ENCODE measurements at regions of chr15 and their contacts with region 1.

Region 1: DNA sequence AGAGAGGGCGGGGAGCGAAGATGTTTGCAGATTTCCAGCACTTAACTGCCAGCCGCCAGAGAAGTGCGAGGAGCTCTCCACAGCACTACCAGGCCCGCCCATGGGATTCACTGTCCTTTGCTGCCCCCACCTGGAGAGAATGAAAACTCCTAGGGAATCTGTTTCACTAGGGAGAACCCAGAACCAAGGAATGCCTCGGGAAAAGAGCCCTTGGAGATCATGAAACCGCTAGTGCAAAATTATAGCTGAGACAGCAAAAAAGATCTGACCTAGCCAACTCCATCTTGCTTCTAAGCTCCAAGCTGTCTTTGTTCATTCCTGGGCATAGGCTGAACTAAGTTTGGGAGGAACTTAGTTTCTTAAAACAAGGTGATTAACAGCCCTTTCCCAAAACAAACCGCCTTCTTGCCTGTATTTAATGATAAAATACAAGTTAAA is 82.6 kb upstream of the GCNT3 start:
- DNase-seq: peak; percentile 44 to 74 (median 65)
- ATAC-seq: peak; percentile 89
- H3K4me3 ChIP-seq: no peak overlapping the region
- H3K4me3 Mint-ChIP-seq: no peak overlapping the region
- H3K27ac ChIP-seq: no peak overlapping the region
- H3K27ac Mint-ChIP-seq: peak overlapping the region in 5 of 9 donors; percentile 2 to 48 (median 22)
- H3K4me1 ChIP-seq: peaks cover 0 to 8% of the 10 kb centered on the region in 2 donors
- H3K4me1 Mint-ChIP-seq: peaks cover 14 to 28% (median 20%) of the 10 kb centered on the region in 7 donors
- H3K27me3 ChIP-seq: no peaks in the 10 kb centered on the region
- H3K27me3 Mint-ChIP-seq: peaks cover 0 to 15% (median 0%) of the 10 kb centered on the region in 5 donors

Region 2: GRCh38 chr15:58770857-58771620 is 757.9 kb before region 1 on chr15 and contains the start of gene MINDY2:
- CTCF ChIA-PET with region 1: no interaction called
- POLR2A ChIA-PET with region 1: no interaction called
- intact Hi-C with region 1: loop called in 1 of 2 experiments (anchors 10 kb)
- DNase-seq: peak; percentile 85 to 92 (median 90)
- ATAC-seq: peak; percentile 98
- H3K4me3 ChIP-seq: peak within 1 kb of the TSS; percentile 83
- H3K4me3 Mint-ChIP-seq: peak within 1 kb of the TSS in 2 of 10 donors; percentile 2 to 20
- H3K27ac ChIP-seq: peak within 1 kb of the TSS; percentile 90
- H3K27ac Mint-ChIP-seq: peak within 1 kb of the TSS in 7 of 9 donors; percentile 86 to 96 (median 93)
- H3K4me1 ChIP-seq: peaks cover 24 to 32% of the 10 kb centered on the region in 2 donors
- H3K4me1 Mint-ChIP-seq: peaks cover 0 to 21% (median 9%) of the 10 kb centered on the region in 7 donors
- H3K27me3 ChIP-seq: no peaks in the 10 kb centered on the region
- H3K27me3 Mint-ChIP-seq: no peaks in the 10 kb centered on the region
- total RNA-seq, gene MINDY2: 10.4 to 16.6 (median 11.5) TPM

Region 3: DNA sequence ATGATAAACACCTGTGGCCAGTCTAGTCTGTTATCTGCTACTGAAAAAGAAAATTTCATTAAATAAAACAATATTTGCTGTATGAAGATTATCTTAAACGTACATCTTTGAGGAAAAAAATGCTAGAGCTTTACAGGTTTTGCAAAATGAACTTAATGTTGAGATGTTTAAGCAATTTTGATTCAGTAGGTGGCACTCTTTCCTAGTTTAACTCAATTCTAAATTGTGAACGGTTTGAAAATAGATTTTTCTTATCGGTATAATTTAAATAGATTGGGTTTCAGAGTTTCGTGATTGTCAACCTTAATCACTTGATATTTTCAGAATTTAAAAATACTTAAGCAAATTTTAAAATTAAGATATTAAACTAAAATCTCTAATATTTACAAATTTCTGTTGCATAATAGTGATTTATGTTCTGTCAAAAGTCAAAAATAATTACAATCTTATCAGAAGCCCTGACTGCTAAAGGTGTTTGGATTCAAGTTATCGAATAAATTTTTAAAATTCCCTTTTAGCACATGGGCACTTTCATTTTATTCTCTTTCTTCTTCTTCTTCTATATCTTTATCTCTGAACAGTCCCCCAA is 548.5 kb before region 1 on chr15:
- CTCF ChIA-PET with region 1: interaction called, 9 read pairs
- POLR2A ChIA-PET with region 1: interaction called, 4 read pairs
- intact Hi-C with region 1: loop called (anchors 1 to 2 kb)
- DNase-seq: peak in 6 of 9 donors; percentile 30 to 57 (median 48)
- ATAC-seq: peak; percentile 62
- H3K4me3 ChIP-seq: no peak overlapping the region
- H3K4me3 Mint-ChIP-seq: peak overlapping the region in 3 of 10 donors; percentile 55 to 74 (median 60)
- H3K27ac ChIP-seq: no peak overlapping the region
- H3K27ac Mint-ChIP-seq: peak overlapping the region in 1 of 9 donors; percentile 85
- H3K4me1 ChIP-seq: peaks cover 19 to 20% of the 10 kb centered on the region in 2 donors
- H3K4me1 Mint-ChIP-seq: peaks cover 21 to 37% (median 27%) of the 10 kb centered on the region in 7 donors
- H3K27me3 ChIP-seq: no peaks in the 10 kb centered on the region
- H3K27me3 Mint-ChIP-seq: peaks cover 0 to 18% (median 0%) of the 10 kb centered on the region in 5 donors

Region 4: GRCh38 chr15:59174835-59175831 is 353.9 kb before region 1 on chr15:
- CTCF ChIA-PET with region 1: interaction called, 9 read pairs
- POLR2A ChIA-PET with region 1: no interaction called
- intact Hi-C with region 1: loop called in 1 of 2 experiments (anchors 2 kb)
- DNase-seq: peak in 4 of 9 donors; percentile 5 to 31 (median 14)
- ATAC-seq: peak; percentile 74
- H3K4me3 ChIP-seq: no peak overlapping the region
- H3K4me3 Mint-ChIP-seq: no peak overlapping the region
- H3K27ac ChIP-seq: no peak overlapping the region
- H3K27ac Mint-ChIP-seq: peak overlapping the region in 1 of 9 donors; percentile 29
- H3K4me1 ChIP-seq: no peaks in the 10 kb centered on the region
- H3K4me1 Mint-ChIP-seq: peaks cover 0 to 18% (median 0%) of the 10 kb centered on the region in 7 donors
- H3K27me3 ChIP-seq: no peaks in the 10 kb centered on the region
- H3K27me3 Mint-ChIP-seq: peaks cover 2 to 21% (median 15%) of the 10 kb centered on the region in 5 donors

Region 5: GRCh38 chr15:59283717-59284336 is 245.2 kb before region 1 on chr15:
- CTCF ChIA-PET with region 1: no interaction called
- POLR2A ChIA-PET with region 1: no interaction called
- intact Hi-C with region 1: no loop called
- DNase-seq: no peak
- ATAC-seq: no peak
- H3K4me3 ChIP-seq: no peak overlapping the region
- H3K4me3 Mint-ChIP-seq: no peak overlapping the region
- H3K27ac ChIP-seq: no peak overlapping the region
- H3K27ac Mint-ChIP-seq: no peak overlapping the region
- H3K4me1 ChIP-seq: no peaks in the 10 kb centered on the region
- H3K4me1 Mint-ChIP-seq: peaks cover 0 to 27% (median 0%) of the 10 kb centered on the region in 7 donors
- H3K27me3 ChIP-seq: no peaks in the 10 kb centered on the region
- H3K27me3 Mint-ChIP-seq: peaks cover 0 to 18% (median 0%) of the 10 kb centered on the region in 5 donors

Region 6: GRCh38 chr15:59562448-59563186 is 33.6 kb after region 1 on chr15:
- CTCF ChIA-PET with region 1: no interaction called
- POLR2A ChIA-PET with region 1: no interaction called
- intact Hi-C with region 1: no loop called
- DNase-seq: no peak
- ATAC-seq: no peak
- H3K4me3 ChIP-seq: no peak overlapping the region
- H3K4me3 Mint-ChIP-seq: no peak overlapping the region
- H3K27ac ChIP-seq: no peak overlapping the region
- H3K27ac Mint-ChIP-seq: no peak overlapping the region
- H3K4me1 ChIP-seq: no peaks in the 10 kb centered on the region
- H3K4me1 Mint-ChIP-seq: peaks cover 0 to 10% (median 2%) of the 10 kb centered on the region in 7 donors
- H3K27me3 ChIP-seq: no peaks in the 10 kb centered on the region
- H3K27me3 Mint-ChIP-seq: peaks cover 0 to 24% (median 0%) of the 10 kb centered on the region in 5 donors

Region 7: DNA sequence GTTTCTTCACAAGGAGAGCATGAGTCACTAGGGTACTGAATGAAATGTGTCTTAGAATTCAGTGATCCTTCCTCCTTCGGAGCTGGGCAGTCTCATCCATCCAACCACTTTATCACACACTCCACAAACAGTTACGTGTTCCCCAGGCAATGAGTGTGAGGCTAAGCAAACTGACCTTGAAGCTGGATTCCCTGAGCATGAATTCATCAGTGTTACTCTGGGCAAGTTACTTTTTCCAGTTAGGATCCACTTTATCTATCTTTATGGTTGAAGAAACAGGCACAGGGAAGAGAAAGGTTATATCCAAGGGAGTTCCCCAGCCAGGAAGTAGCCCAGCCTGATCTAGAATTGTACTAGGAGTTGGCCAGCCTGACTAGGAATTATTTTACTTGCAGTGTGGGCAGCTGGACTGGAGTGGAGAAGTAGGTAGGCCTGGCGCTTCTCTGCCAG is 65.5 kb after region 1 on chr15:
- CTCF ChIA-PET with region 1: no interaction called
- POLR2A ChIA-PET with region 1: no interaction called
- intact Hi-C with region 1: no loop called
- DNase-seq: no peak
- ATAC-seq: no peak
- H3K4me3 ChIP-seq: no peak overlapping the region
- H3K4me3 Mint-ChIP-seq: no peak overlapping the region
- H3K27ac ChIP-seq: no peak overlapping the region
- H3K27ac Mint-ChIP-seq: no peak overlapping the region
- H3K4me1 ChIP-seq: no peaks in the 10 kb centered on the region
- H3K4me1 Mint-ChIP-seq: peaks cover 7 to 18% (median 8%) of the 10 kb centered on the region in 7 donors
- H3K27me3 ChIP-seq: no peaks in the 10 kb centered on the region
- H3K27me3 Mint-ChIP-seq: peaks cover 4 to 17% (median 10%) of the 10 kb centered on the region in 5 donors

Region 8: GRCh38 chr15:59622289-59622688 is 93.3 kb after region 1 on chr15:
- CTCF ChIA-PET with region 1: no interaction called
- POLR2A ChIA-PET with region 1: no interaction called
- intact Hi-C with region 1: loop called in 1 of 2 experiments (anchors 1 kb)
- DNase-seq: peak in 1 of 9 donors; percentile 48
- ATAC-seq: no peak
- H3K4me3 ChIP-seq: no peak overlapping the region
- H3K4me3 Mint-ChIP-seq: no peak overlapping the region
- H3K27ac ChIP-seq: no peak overlapping the region
- H3K27ac Mint-ChIP-seq: no peak overlapping the region
- H3K4me1 ChIP-seq: no peaks in the 10 kb centered on the region
- H3K4me1 Mint-ChIP-seq: no peaks in the 10 kb centered on the region
- H3K27me3 ChIP-seq: peaks cover 0 to 3% of the 10 kb centered on the region in 2 donors
- H3K27me3 Mint-ChIP-seq: peaks cover 0 to 25% (median 12%) of the 10 kb centered on the region in 5 donors

Region 9: DNA sequence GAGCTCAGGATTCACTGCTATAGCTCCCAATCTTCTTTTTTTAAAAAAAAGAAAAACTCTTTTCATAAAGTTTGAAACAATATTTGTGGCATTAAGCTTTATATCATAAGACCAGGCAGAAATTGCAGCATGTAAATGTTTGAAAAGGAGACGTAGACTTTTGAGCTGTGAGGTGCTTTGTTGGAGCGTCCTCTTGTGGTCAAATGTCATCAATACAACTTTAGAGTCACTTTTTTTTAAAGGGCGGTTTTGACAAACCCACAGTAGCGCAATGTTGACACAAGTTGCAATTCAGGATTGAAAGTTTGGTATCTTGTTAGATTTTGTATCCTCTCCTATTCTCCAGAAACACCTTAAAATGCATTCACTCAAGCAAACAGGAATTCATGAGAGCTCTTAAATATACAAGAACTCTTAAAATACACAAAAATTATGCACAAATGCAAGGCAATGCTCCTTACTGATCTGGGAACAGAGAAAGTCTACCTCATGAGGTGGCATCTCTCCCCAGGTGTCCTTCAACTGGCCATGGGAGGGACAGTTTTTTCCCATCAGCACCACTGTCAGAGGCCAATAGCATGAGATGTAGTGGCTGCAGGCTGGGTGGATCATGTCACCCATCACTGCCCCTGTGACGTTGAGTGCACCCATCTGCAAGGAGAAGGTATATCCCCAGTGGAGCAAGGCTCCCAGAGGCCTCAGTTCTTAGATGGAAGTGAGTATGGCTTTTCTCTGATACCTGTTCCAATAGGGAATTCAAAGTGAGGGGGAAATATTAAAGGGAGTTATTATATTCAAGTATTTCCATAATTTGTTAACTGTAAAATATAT is 798.1 kb after region 1 on chr15:
- CTCF ChIA-PET with region 1: no interaction called
- POLR2A ChIA-PET with region 1: no interaction called
- intact Hi-C with region 1: loop called in 1 of 2 experiments (anchors 2 kb)
- DNase-seq: peak in 7 of 9 donors; percentile 24 to 62 (median 56)
- ATAC-seq: peak; percentile 60
- H3K4me3 ChIP-seq: no peak overlapping the region
- H3K4me3 Mint-ChIP-seq: no peak overlapping the region
- H3K27ac ChIP-seq: no peak overlapping the region
- H3K27ac Mint-ChIP-seq: peak overlapping the region in 1 of 9 donors; percentile 2
- H3K4me1 ChIP-seq: no peaks in the 10 kb centered on the region
- H3K4me1 Mint-ChIP-seq: peaks cover 0 to 14% (median 4%) of the 10 kb centered on the region in 7 donors
- H3K27me3 ChIP-seq: peaks cover 0 to 10% of the 10 kb centered on the region in 2 donors
- H3K27me3 Mint-ChIP-seq: peaks cover 19 to 71% (median 35%) of the 10 kb centered on the region in 5 donors